Prostate gland (tissue), 2 donors: ENCODE measurements at regions of chr2 and their contacts with region 1.

Region 1: GRCh38 chr2:30231212-30231995 is at the start of gene LBH:
- DNase-seq: peak; percentile 89
- H3K4me3 ChIP-seq: peak within 1 kb of the TSS; percentile 66 to 70
- H3K27ac ChIP-seq: peak within 1 kb of the TSS; percentile 78 to 80
- H3K4me1 ChIP-seq: no peaks in the 10 kb centered on the region
- H3K27me3 ChIP-seq: no peaks in the 10 kb centered on the region
- CTCF ChIP-seq: peak in 1 of 4 experiments; percentile 15
- POLR2A ChIP-seq: peak; percentile 99
- total RNA-seq, gene LBH: 33.3 to 41.8 TPM

Region 2: DNA sequence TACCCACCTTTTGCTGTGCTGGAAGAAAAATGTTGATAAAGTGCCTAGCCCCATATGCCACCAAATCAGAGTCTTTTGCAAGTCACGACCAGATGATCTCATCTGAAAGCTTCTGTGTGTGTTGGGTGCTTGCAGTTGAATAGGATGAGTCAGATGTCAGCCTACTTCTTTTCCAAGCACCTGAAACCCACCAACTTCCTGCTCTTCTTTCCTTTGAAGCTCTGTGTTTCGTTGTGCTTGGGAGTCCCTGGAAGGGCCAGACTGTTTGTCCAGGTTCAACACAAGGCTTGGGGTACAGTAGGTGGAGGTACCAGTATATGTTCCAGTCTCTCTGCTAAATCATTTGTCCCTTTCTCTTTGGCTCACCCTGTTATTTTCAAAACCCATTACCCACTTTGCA is 178.8 kb after region 1 on chr2:
- intact Hi-C with region 1: loop called (anchors 5 kb)
- DNase-seq: no peak
- H3K4me3 ChIP-seq: no peak overlapping the region
- H3K27ac ChIP-seq: no peak overlapping the region
- H3K4me1 ChIP-seq: no peaks in the 10 kb centered on the region
- H3K27me3 ChIP-seq: no peaks in the 10 kb centered on the region
- CTCF ChIP-seq: no peak
- POLR2A ChIP-seq: no peak

Region 3: GRCh38 chr2:30481323-30481800 is 250.0 kb after region 1 on chr2:
- intact Hi-C with region 1: loop called (anchors 5 kb)
- DNase-seq: no peak
- H3K4me3 ChIP-seq: no peak overlapping the region
- H3K27ac ChIP-seq: no peak overlapping the region
- H3K4me1 ChIP-seq: no peaks in the 10 kb centered on the region
- H3K27me3 ChIP-seq: no peaks in the 10 kb centered on the region
- CTCF ChIP-seq: no peak
- POLR2A ChIP-seq: no peak